ENCODE measurements at regions of chr1 and their contacts with region 1.

Region 1: DNA sequence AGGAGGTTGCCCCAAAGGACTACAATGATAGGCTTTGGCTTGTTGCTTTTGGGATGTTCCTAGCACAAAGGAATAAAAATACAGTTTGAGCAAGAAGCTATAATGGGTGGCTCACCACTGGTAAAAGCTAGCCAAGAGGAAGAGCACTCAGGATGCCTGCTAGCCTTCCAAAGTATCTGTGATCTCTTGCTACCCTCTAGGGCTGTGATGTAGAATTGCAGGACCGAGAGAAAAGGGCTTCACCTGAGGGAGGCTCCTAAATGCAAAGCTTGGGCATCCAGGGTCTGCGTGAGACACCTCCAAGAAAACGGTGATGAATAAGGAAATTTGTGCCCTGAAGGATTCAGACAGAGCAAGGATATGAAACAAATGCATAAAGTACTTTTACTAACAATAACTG is 17.7 kb downstream of the IVL start:
- DNase-seq: no peak
- H3K4me3 ChIP-seq: no peak overlapping the region
- H3K27me3 ChIP-seq: no peaks in the 10 kb centered on the region
- CTCF ChIP-seq: peak; percentile 70

Region 2: DNA sequence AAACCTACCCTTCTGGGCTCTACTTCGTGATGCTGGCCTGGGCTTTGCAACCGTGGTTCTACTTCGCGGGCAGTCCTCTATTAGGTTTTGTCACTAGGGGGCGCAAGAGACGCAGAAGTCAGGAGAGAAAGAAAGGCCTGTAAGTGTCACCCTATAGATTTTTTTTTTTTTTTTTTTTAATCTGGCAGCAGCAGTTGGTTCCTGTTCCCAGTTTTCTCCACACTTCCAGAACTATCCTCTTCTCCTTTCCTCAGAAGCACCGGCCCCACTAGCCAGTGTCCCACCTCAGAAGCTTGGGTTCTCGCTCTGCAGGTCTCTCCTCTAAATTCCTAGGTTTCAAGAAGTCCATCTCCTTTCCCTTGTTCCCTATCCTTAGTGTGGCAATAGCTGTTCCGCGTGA is 272.0 kb before region 1 on chr1:
- CTCF ChIA-PET with region 1: interaction called, 25 read pairs
- POLR2A ChIA-PET with region 1: no interaction called
- DNase-seq: no peak
- H3K4me3 ChIP-seq: no peak overlapping the region
- H3K27me3 ChIP-seq: no peaks in the 10 kb centered on the region
- CTCF ChIP-seq: peak; percentile 77

Region 3: GRCh38 chr1:152864443-152864842 is 61.6 kb before region 1 on chr1:
- CTCF ChIA-PET with region 1: interaction called, 147 read pairs
- POLR2A ChIA-PET with region 1: no interaction called
- DNase-seq: no peak
- H3K4me3 ChIP-seq: no peak overlapping the region
- H3K27me3 ChIP-seq: peaks cover 2% of the 10 kb centered on the region; the same call in 1 of the 2 replicates
- CTCF ChIP-seq: no peak

Region 4: GRCh38 chr1:152869808-152870419 is 56.2 kb before region 1 on chr1:
- CTCF ChIA-PET with region 1: interaction called, 147 read pairs
- POLR2A ChIA-PET with region 1: no interaction called
- DNase-seq: no peak
- H3K4me3 ChIP-seq: no peak overlapping the region
- H3K27me3 ChIP-seq: peaks cover 2% of the 10 kb centered on the region; the same call in 1 of the 2 replicates
- CTCF ChIP-seq: peak; percentile 87

Region 5: GRCh38 chr1:152878042-152878441 is 48.0 kb before region 1 on chr1 and contains the start of gene SMCP:
- CTCF ChIA-PET with region 1: interaction called, 147 read pairs
- POLR2A ChIA-PET with region 1: no interaction called
- DNase-seq: no peak
- H3K4me3 ChIP-seq: no peak within 1 kb of the TSS
- H3K27me3 ChIP-seq: no peaks in the 10 kb centered on the region
- CTCF ChIP-seq: no peak
- polyA plus RNA-seq, gene SMCP: not detected in 2 replicates

Region 6: DNA sequence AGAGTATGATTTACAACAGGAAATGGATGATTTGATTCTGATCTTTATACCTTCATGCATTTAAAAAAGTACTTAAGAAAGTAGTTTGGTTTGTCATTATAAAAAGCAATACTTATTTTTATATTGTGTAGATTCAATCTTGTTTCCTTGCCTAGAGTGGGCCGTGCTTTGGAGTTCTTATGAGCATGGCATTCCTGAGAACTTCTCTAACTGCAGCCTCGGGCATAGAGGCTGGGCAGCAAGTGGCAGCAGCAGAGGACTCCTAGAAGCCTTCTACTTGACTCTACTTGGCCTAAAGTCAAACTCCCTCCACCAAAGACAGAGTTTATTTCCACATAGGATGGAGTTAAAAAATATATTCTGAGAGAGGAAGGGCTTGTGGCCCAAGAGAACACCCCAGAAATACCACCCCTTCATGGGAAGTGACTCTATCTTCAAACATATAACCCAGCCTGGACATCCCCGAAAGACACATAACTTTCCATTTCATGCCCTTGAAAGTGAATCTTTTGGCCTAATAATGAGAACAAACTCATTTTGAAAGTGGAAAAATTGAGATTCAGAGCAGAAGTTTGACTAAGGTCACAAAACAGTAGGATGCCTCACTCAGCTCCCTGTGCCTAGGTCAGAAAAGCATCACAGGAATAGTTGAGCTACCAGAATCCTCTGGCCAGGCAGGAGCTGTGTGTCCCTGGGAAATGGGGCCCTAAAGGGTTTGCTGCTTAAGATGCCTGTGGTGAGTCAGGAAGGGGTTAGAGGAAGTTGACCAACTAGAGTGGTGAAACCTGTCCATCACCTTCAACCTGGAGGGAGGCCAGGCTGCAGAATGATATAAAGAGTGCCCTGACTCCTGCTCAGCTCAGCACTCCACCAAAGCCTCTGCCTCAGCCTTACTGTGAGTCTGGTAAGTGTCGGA is 18.1 kb before region 1 on chr1 and contains the start of gene IVL:
- CTCF ChIA-PET with region 1: interaction called, 12 read pairs
- POLR2A ChIA-PET with region 1: no interaction called
- DNase-seq: no peak
- H3K4me3 ChIP-seq: no peak within 1 kb of the TSS
- H3K27me3 ChIP-seq: peaks cover 6% of the 10 kb centered on the region; the same call in 1 of the 2 replicates
- CTCF ChIP-seq: no peak
- polyA plus RNA-seq, gene IVL: 0.05 TPM in 1 of 2 replicates, not detected in the other

Region 7: GRCh38 chr1:153180556-153180955 is 254.5 kb after region 1 on chr1:
- CTCF ChIA-PET with region 1: no interaction called
- POLR2A ChIA-PET with region 1: no interaction called
- DNase-seq: no peak
- H3K4me3 ChIP-seq: no peak overlapping the region
- H3K27me3 ChIP-seq: no peaks in the 10 kb centered on the region
- CTCF ChIP-seq: no peak

Region 8: GRCh38 chr1:153324912-153325311 is 398.8 kb after region 1 on chr1:
- CTCF ChIA-PET with region 1: no interaction called
- POLR2A ChIA-PET with region 1: no interaction called
- DNase-seq: no peak
- H3K4me3 ChIP-seq: no peak overlapping the region
- H3K27me3 ChIP-seq: no peaks in the 10 kb centered on the region
- CTCF ChIP-seq: no peak

Measured in BJ (cell line).